Posterior vena cava (tissue), 2 donors: ENCODE measurements at regions of chr15 and their contacts with region 1.

Region 1: DNA sequence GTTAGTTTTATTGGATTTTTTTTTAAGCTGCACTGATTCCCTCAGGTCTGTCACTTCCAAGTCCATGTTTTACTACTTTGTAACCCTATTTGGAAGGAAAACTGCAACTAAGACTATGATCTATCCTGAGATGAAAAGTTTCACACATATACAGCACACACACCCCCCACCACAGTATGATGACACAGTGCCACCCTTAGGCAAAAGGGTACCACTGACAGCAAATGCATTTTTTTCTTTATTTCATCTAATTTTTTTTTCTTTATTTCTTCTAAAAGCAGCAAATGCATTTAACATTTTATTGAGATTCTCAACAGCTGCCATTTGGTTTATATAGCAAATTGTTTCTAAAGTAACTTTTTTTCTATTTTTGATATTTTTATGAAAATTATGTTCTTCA is 21.2 kb downstream of the NGRN start:
- DNase-seq: no peak

Region 2: GRCh38 chr15:89910891-89911626 is 375.6 kb before region 1 on chr15:
- intact Hi-C with region 1: no loop called
- DNase-seq: no peak

Region 3: DNA sequence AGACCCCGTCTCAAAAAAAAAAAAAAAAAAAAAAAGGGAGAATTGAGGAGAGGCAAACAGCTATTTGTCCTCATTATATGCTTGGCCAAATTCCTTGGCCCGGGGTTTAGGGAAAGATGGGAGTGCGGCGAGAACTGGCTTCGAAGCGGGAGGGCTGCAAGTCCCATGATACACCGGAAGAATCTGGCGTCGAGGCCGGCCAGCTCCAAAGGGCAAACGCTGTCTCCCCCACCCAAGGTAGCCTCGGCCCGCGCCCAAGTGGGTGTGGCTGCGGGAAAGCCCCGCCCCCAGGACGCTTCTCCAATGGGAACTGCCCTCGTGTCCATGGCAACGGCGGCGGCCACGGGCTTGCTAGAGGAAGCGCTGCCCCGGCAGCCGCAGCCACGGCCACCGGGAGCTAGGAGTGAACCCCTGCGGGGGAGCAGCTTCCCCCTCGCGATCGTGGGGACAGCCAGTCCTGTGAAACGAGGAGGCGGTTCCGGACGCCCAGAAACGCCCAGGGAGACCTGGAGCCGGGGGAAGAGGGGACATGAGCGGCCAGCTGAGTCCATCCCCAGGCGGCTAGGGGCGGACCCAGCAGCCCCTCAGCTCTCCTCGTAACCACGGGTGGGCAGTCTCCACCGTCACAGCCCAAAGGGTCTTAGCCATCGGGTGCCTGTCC is 37.3 kb before region 1 on chr15 and contains the start of gene TTLL13:
- intact Hi-C with region 1: loop called in 1 of 2 experiments (anchors 2 kb)
- DNase-seq: peak; percentile 98
- total RNA-seq, gene TTLL13: not detected